Esophagus muscularis mucosa (tissue), 4 donors: ENCODE measurements at regions of chr6 and their contacts with region 1.

Region 1: DNA sequence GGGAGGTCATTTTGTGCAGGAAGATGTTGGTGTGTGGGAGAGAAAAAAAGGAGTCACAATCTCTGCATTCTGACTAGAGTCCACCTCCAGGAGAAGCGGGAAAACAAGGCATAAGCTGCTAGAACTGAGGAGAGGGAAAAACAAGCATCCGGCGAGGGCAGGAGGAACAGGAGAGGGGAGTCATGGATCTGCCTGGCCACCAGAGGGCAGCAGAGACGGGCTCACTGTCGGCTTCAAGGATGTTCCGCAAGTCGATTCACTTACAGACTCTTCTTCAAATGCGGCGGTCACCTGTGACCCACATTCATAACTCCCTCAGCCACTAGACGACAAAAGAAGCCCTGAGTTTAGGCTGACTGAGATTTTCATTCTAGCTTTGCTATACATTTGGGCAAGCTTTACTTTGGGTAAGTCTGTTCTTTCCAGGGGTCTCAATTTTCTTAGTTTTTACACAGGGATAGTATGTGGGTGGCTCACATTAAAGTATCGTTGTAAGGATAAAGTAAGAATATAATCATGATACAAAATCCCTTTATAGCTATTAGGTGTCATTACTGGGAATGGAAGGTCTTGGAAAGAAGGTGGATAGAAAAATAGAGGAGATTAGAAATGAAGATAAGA is 6.6 kb upstream of the BTNL2 start:
- DNase-seq: peak; percentile 94
- H3K4me3 ChIP-seq: no peak overlapping the region
- H3K27ac ChIP-seq: no peak overlapping the region
- H3K4me1 ChIP-seq: peaks cover 0 to 10% (median 7%) of the 10 kb centered on the region in 4 donors
- H3K27me3 ChIP-seq: peaks cover 0 to 65% (median 6%) of the 10 kb centered on the region in 4 donors
- CTCF ChIP-seq: peak; percentile 89 to 97 (median 92)
- EP300 ChIP-seq: no peak
- POLR2A ChIP-seq: no peak

Region 2: DNA sequence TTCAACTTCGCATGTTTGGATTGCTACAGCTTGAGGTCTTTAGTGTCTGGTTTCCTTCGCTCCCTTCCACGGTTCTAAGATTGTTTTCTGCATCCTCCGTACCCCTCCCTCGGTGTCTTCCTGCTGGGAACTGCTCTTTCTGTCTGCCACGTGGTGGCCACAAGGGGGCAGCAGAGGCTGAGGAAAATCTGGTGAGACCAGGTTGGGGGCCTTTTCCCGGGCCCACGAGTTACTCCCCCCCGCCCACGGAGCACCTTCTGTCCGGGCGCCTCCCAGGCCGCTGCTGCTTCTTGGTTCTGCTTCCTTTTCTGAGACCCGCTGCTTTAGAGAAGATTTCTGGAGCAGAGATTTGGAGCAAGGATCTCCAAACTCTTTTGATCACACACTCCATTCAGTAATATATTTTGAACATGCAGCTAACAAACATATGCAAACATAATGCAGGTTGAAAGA is 168.6 kb before region 1 on chr6:
- intact Hi-C with region 1: loop called (anchors 5 kb)
- DNase-seq: peak; percentile 95
- H3K4me3 ChIP-seq: peak overlapping the region; percentile 29 to 38 (median 35)
- H3K27ac ChIP-seq: peak overlapping the region; percentile 62 to 79 (median 74)
- H3K4me1 ChIP-seq: peaks cover 7 to 21% (median 19%) of the 10 kb centered on the region in 4 donors
- H3K27me3 ChIP-seq: peaks cover 0 to 4% (median 0%) of the 10 kb centered on the region in 4 donors
- CTCF ChIP-seq: peak; percentile 87 to 89 (median 88)
- EP300 ChIP-seq: no peak
- POLR2A ChIP-seq: no peak

Region 3: DNA sequence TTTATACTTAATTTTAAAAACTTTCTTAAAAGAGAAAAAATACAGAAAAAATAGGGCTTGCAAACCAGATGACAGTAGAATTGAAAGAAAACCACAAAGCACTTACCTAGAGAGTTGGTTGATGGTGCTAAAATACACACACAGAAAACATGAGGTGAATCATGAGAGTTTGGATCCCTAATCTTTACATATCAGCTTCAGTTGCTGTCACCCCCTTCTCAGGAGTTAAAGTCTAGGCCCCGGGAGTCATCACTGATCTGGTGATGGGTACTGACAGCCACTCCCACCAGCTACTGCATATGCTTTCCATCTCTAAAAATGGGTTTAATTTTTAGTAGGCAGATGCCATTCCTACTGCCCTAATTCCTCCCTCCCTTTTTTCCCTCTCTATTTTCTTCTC is 58.5 kb before region 1 on chr6:
- intact Hi-C with region 1: no loop called
- DNase-seq: no peak
- H3K4me3 ChIP-seq: no peak overlapping the region
- H3K27ac ChIP-seq: no peak overlapping the region
- H3K4me1 ChIP-seq: no peaks in the 10 kb centered on the region
- H3K27me3 ChIP-seq: no peaks in the 10 kb centered on the region
- CTCF ChIP-seq: no peak
- EP300 ChIP-seq: no peak
- POLR2A ChIP-seq: no peak

Region 4: GRCh38 chr6:32700391-32701040 is 287.0 kb after region 1 on chr6:
- intact Hi-C with region 1: loop called (anchors 1 kb)
- DNase-seq: no peak
- H3K4me3 ChIP-seq: no peak overlapping the region
- H3K27ac ChIP-seq: no peak overlapping the region
- H3K4me1 ChIP-seq: no peaks in the 10 kb centered on the region
- H3K27me3 ChIP-seq: peaks cover 0 to 49% (median 0%) of the 10 kb centered on the region in 4 donors
- CTCF ChIP-seq: peak; percentile 42 to 72 (median 69)
- EP300 ChIP-seq: no peak
- POLR2A ChIP-seq: no peak

Region 5: DNA sequence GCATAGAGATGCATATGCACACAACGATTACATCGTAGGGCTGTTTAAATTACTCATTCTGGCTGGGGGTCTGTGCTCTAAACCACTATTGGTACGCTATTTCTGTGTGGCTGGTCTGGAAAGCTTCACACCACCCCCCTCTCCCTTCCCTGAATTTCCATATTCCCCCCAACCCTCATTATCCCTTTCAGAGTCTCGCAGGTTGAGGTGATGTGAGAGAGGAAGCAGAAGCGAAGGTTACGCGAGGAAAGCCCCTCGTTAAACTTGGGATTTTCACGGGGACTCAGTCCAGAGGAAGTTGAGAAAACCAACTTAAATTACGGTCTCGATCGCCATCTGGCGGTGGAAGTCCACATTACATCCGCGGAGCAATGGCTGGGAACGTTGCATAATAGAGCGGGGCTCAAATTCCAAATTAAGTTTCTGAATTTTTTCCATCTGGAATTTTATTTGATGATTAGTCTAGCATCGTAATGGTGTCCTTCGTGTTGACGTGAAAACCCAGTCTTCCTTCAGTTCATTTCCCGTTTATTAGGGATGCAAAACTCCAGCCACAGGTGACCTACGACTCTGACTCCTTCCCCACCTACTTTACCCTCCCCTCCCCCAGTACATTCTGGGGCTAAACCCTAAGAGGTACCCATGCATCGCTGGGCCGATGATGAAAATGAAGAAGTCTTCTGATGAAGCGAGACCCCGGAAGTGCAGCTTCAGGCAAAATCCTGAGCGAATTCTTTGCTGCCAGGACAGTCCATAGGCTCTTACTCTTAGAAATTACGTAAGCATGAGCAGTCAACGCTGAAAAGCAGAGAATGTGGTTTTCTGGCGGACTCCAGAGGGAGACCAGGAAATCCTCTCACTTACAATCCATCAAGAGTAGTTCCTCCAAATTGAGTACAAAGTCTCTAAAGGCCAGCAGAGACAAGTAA is 383.6 kb after region 1 on chr6:
- intact Hi-C with region 1: loop called (anchors 2 kb)
- DNase-seq: peak; percentile 95
- H3K4me3 ChIP-seq: peak overlapping the region; percentile 5 to 39 (median 24)
- H3K27ac ChIP-seq: no peak overlapping the region
- H3K4me1 ChIP-seq: peaks cover 0 to 11% (median 9%) of the 10 kb centered on the region in 4 donors
- H3K27me3 ChIP-seq: peaks cover 0 to 74% (median 7%) of the 10 kb centered on the region in 4 donors
- CTCF ChIP-seq: peak; percentile 91 to 95 (median 94)
- EP300 ChIP-seq: no peak
- POLR2A ChIP-seq: no peak

Region 6: DNA sequence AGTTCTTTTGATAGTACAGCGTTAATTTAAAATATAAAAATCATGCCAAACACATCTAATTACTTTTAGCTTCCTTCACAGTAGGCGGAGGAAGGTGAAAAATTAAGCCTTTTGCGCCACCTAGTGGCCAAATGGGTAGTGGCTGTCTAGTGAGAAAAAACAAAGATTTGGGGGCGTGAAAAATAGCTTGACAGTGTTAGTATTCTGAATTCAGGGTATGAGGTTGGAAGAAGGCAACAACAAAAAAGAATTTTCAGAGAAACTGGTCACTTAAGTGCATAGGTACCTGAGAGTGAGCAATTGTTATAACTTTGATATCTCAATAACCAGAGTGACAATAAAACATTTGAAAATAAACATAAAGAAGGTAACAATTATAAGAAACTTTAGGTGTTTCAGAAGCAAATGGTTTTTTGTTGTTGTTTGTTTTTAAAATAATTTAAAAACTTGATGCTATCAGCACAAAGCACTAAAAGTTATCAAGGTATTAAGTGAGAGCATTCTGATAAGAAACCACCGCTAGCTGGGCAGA is 454.8 kb after region 1 on chr6:
- intact Hi-C with region 1: loop called (anchors 5 kb)
- DNase-seq: peak; percentile 93
- H3K4me3 ChIP-seq: no peak overlapping the region
- H3K27ac ChIP-seq: no peak overlapping the region
- H3K4me1 ChIP-seq: peaks cover 0 to 7% (median 2%) of the 10 kb centered on the region in 4 donors
- H3K27me3 ChIP-seq: peaks cover 0 to 7% (median 2%) of the 10 kb centered on the region in 4 donors
- CTCF ChIP-seq: peak; percentile 94 to 96 (median 95)
- EP300 ChIP-seq: no peak
- POLR2A ChIP-seq: no peak